Prostate gland (tissue), 2 donors: ENCODE measurements at regions of chr21 and their contacts with region 1.

Region 1: DNA sequence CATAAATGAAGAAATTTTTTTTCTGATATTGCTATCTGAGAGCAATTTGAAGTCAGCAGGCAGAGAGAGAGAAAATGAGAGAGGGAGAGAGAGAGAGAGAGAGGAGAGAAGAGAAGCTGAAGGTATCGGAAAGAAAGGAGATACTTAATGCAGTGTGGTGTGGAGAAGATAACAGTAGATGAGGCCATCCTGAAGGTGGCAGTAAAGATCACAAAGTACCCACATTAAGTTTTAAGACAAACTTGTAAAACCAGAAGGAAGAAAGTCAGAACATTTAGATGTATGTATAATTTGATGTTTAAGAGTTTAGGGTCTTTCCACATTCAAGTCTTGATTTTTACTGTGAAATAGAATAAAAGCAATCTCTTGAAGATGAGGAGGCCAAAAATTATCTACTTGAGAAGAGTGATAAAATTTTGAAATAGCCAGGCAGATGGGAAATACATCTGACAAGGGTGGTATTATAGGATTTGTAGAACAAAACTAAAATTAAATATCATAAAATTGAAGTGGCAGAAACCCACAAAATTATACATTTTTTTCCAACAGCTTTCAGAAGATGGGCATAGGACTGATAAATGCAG is 1753.4 kb downstream of the MRPL39 start:
- DNase-seq: no peak
- H3K4me3 ChIP-seq: no peak overlapping the region
- H3K27ac ChIP-seq: no peak overlapping the region
- H3K4me1 ChIP-seq: no peaks in the 10 kb centered on the region
- H3K27me3 ChIP-seq: no peaks in the 10 kb centered on the region
- CTCF ChIP-seq: peak in 3 of 4 experiments; percentile 36 to 60 (median 44)
- POLR2A ChIP-seq: no peak

Region 2: DNA sequence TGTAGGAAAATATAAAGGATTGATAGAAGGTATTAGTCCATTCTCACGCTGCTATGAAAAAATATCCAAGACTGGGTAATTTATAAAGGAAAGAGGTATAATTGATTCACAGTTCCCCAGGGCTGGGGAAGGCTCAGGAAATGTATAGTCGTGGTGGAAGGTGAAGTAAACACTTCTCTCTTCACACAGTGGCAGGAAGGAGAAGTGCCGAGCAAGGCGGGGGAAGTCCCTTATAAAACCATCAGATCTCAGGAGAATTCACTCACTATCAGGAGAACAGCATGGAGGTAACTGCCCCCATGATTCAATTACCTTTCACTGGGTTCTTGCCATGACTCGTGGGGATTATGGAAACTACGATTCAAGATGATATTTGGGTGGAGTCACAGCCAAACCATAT is 52.6 kb before region 1 on chr21:
- intact Hi-C with region 1: no loop called
- DNase-seq: no peak
- H3K4me3 ChIP-seq: no peak overlapping the region
- H3K27ac ChIP-seq: no peak overlapping the region
- H3K4me1 ChIP-seq: no peaks in the 10 kb centered on the region
- H3K27me3 ChIP-seq: no peaks in the 10 kb centered on the region
- CTCF ChIP-seq: no peak
- POLR2A ChIP-seq: no peak

Region 3: GRCh38 chr21:23986214-23986613 is 132.3 kb after region 1 on chr21:
- intact Hi-C with region 1: no loop called
- DNase-seq: no peak
- H3K4me3 ChIP-seq: no peak overlapping the region
- H3K27ac ChIP-seq: no peak overlapping the region
- H3K4me1 ChIP-seq: no peaks in the 10 kb centered on the region
- H3K27me3 ChIP-seq: no peaks in the 10 kb centered on the region
- CTCF ChIP-seq: no peak
- POLR2A ChIP-seq: no peak

Region 4: DNA sequence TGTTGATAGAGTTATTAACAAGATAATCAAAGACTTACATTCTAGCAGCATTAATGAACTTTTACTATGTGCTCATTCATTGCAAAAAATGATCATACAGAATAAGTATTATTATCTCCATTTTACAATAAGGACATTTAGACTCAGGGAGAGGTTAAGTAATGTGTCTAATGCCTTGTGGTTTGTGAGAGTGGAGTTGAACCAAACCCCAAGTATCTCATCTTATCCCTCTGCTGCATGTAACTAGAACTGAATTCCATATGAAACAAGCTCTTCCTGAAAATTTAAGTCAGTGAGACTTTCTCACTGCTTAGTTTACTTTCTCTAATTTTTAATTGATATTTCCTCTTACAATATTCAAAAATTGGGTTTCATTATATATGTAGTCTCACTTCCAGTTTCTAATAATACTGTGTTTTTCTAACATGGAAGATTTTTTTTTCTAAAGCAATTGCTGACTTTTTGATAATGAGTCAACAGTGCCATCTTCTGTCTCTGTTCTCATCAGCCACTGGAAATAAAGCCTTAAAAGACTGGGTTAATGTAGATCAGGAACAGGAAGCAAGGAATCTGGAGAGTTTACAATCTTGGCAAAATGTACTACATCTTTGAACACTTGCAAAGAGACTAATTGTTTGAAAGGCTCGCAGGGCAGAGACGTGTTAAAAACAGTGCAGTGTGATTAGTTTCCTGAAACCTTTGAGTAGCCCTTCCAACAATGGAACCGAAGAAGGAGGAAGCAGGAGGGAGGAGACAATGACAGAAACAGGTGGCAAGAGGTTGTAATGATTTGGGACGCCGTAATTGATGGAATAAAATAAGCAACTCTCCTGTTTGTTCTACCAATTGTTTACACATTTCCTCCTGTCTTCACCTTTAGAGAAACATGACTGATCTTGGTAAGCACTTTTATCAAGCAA is 1185.8 kb after region 1 on chr21:
- intact Hi-C with region 1: loop called (anchors 10 kb)
- DNase-seq: no peak
- H3K4me3 ChIP-seq: no peak overlapping the region
- H3K27ac ChIP-seq: no peak overlapping the region
- H3K4me1 ChIP-seq: no peaks in the 10 kb centered on the region
- H3K27me3 ChIP-seq: no peaks in the 10 kb centered on the region
- CTCF ChIP-seq: peak in 2 of 4 experiments; percentile 38 to 48
- POLR2A ChIP-seq: no peak

Region 5: GRCh38 chr21:25385911-25386474 is 1532.1 kb after region 1 on chr21:
- intact Hi-C with region 1: loop called (anchors 10 kb)
- DNase-seq: peak; percentile 8
- H3K4me3 ChIP-seq: no peak overlapping the region
- H3K27ac ChIP-seq: no peak overlapping the region
- H3K4me1 ChIP-seq: no peaks in the 10 kb centered on the region
- H3K27me3 ChIP-seq: no peaks in the 10 kb centered on the region
- CTCF ChIP-seq: peak; percentile 73 to 77 (median 74)
- POLR2A ChIP-seq: no peak